PC-9 (cell line): ENCODE measurements at regions of chr7 and their contacts with region 1.

Region 1: GRCh38 chr7:21945454-21946227 is at the start of gene CDCA7L:
- DNase-seq: peak; percentile 79 to 95
- H3K4me3 ChIP-seq: peak within 1 kb of the TSS; percentile 91
- H3K27ac ChIP-seq: peak within 1 kb of the TSS; percentile 94
- H3K4me1 ChIP-seq: peaks cover 53% of the 10 kb centered on the region
- H3K27me3 ChIP-seq: no peaks in the 10 kb centered on the region
- CTCF ChIP-seq: no peak
- total RNA-seq, gene CDCA7L: 243 and 252 TPM in 2 replicates

Region 2: DNA sequence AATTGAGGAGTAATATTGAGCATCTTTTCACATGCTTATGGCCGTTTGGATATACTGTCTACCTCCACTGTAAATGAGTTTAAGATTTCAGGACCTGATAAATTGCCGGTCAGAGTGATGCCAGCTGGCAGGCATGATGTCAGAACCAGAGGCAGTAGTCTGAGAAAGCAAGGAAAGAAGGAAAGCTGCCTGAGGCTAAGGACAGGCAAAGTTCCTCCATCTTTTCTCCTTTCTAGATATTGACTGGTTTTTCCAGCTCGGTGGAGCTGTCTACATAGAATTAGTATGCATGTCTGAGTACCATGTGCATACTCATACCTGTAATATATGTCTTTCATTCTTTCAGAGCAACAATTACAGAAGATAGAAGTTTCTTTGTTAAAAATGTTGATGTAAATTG is 52.3 kb before region 1 on chr7:
- CTCF ChIA-PET with region 1: no interaction called
- POLR2A ChIA-PET with region 1: interaction called, 19 read pairs
- intact Hi-C with region 1: no loop called
- DNase-seq: no peak
- H3K4me3 ChIP-seq: no peak overlapping the region
- H3K27ac ChIP-seq: no peak overlapping the region
- H3K4me1 ChIP-seq: no peaks in the 10 kb centered on the region
- H3K27me3 ChIP-seq: no peaks in the 10 kb centered on the region
- CTCF ChIP-seq: no peak

Region 3: DNA sequence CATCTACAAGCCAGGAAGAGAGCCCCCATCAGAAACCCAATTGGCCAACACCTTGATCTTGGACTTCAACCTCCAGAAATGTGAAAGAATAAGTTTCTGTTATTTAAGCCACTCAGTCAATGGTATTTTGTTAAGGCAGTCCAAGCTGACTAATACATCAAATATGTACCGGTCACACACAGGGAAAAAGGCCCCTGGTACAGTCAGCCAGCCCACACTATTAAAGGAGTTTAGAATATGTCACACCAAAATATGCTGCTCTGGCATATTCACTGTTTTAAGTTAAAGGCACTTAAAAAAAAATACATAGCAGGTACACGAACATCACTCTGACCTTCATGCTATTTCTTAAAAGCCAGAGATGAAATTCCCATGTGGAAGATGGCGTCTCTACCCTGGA is 15.3 kb after region 1 on chr7:
- CTCF ChIA-PET with region 1: no interaction called
- POLR2A ChIA-PET with region 1: no interaction called
- intact Hi-C with region 1: loop called (anchors 2 kb)
- DNase-seq: peak; percentile 33 to 69
- H3K4me3 ChIP-seq: no peak overlapping the region
- H3K27ac ChIP-seq: no peak overlapping the region
- H3K4me1 ChIP-seq: peaks cover 15% of the 10 kb centered on the region
- H3K27me3 ChIP-seq: no peaks in the 10 kb centered on the region
- CTCF ChIP-seq: no peak

Region 4: DNA sequence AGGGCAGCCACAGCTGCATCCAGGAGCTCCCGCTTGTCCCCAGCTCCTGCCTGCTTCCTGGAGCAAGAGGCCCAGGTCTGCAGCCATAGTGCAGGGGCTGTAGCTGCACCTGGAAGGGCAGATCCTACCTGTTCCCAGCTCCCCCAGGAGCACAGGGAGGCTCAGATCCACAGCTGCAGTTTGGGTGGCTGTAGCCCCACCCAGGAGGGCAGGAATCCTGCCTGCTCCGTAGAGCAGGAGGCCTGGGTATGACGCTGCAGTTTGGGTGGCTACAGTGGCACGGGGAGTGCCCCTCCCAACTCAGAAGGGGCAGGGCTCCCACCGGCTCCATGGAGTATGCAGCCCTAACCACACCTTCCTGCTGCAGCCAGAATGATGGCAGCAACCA is 26.8 kb after region 1 on chr7:
- CTCF ChIA-PET with region 1: no interaction called
- POLR2A ChIA-PET with region 1: no interaction called
- intact Hi-C with region 1: loop called (anchors 1 kb)
- DNase-seq: peak; percentile 37 to 80
- H3K4me3 ChIP-seq: no peak overlapping the region
- H3K27ac ChIP-seq: no peak overlapping the region
- H3K4me1 ChIP-seq: no peaks in the 10 kb centered on the region
- H3K27me3 ChIP-seq: no peaks in the 10 kb centered on the region
- CTCF ChIP-seq: no peak

Region 5: GRCh38 chr7:23597094-23598091 is 1651.8 kb after region 1 on chr7 and contains the start of gene CCDC126:
- CTCF ChIA-PET with region 1: no interaction called
- POLR2A ChIA-PET with region 1: no interaction called
- intact Hi-C with region 1: loop called (anchors 10 kb)
- DNase-seq: peak; percentile 87 to 95
- H3K4me3 ChIP-seq: peak within 1 kb of the TSS; percentile 66
- H3K27ac ChIP-seq: peak within 1 kb of the TSS; percentile 58
- H3K4me1 ChIP-seq: peaks cover 40% of the 10 kb centered on the region
- H3K27me3 ChIP-seq: no peaks in the 10 kb centered on the region
- CTCF ChIP-seq: no peak
- total RNA-seq, gene CCDC126: 5.9 and 6.2 TPM in 2 replicates